HCT116 (cell line): ENCODE measurements at regions of chr3 and their contacts with region 1.

Region 1: DNA sequence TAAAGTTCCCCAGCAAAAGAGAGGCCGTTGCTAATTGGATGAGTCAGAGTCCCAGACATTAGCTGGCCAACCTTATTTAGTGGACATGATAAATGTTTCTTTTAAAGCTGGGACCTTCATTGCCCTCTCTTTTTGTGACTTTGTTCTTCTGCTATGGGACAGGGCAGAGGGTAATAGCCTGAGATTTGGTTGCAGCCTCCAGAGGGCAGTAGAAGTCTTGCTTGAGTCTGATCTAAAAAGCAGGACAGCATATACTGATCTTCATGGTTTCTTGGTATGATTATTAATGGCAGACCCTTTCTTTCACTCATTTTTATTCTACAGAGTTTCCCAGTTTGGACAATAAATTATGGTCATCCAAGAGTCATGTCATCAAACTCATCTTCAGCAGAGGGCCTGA is 25.1 kb upstream of the ZKSCAN7 start:
- DNase-seq: peak; percentile 10
- ATAC-seq: peak; percentile 77
- H3K4me3 ChIP-seq: no peak overlapping the region
- H3K27ac ChIP-seq: no peak overlapping the region
- H3K4me1 ChIP-seq: no peaks in the 10 kb centered on the region
- H3K27me3 ChIP-seq: no peaks in the 10 kb centered on the region
- CTCF ChIP-seq: peak; percentile 40 to 60 (median 55); a peak in 5 of 6 replicates
- POLR2A ChIP-seq: no peak
- RAD21 ChIP-seq: peak; percentile 62

Region 2: DNA sequence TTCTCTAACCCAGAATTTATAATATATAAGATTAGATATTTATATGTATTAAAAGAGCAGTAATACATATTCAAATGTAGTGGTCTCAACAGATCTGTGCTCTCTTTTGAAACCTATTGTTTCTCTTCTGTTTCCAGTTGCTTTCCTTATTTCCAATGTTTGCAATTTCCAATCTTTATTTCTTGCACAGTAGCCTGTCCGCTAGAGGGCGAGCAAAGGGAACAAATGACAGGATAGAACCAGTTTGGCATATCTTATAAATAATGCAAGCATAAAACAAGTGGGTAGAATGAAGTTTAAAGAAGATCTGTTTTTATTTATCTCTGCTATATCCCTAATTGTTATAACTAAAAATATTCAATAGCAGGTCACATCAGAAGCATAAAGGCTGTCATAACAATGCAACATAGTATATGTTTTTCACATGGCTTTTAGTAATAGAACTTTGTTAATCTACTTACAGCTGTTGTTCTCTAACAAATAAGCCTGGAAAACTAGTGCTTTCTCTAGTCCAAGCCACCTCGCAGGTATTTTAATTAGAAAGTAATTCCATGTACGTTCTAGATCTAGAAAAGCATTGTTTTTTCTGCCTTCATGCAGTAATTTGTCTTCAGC is 206.5 kb before region 1 on chr3:
- CTCF ChIA-PET with region 1: interaction called, 3 read pairs
- POLR2A ChIA-PET with region 1: no interaction called
- RAD21 ChIA-PET with region 1: no interaction called
- intact Hi-C with region 1: loop called (anchors 5 kb)
- DNase-seq: peak; percentile 46
- ATAC-seq: peak; percentile 76
- H3K4me3 ChIP-seq: no peak overlapping the region
- H3K27ac ChIP-seq: no peak overlapping the region
- H3K4me1 ChIP-seq: peaks cover 0 to 4% of the 10 kb centered on the region in 2 experiments; a peak in 1 of 4 replicates
- H3K27me3 ChIP-seq: no peaks in the 10 kb centered on the region
- CTCF ChIP-seq: peak; percentile 78 to 91 (median 81)
- POLR2A ChIP-seq: no peak
- RAD21 ChIP-seq: peak; percentile 84

Region 3: GRCh38 chr3:44734646-44735168 is 204.8 kb after region 1 on chr3:
- CTCF ChIA-PET with region 1: no interaction called
- POLR2A ChIA-PET with region 1: no interaction called
- RAD21 ChIA-PET with region 1: no interaction called
- intact Hi-C with region 1: no loop called
- DNase-seq: no peak
- ATAC-seq: no peak
- H3K4me3 ChIP-seq: no peak overlapping the region
- H3K27ac ChIP-seq: no peak overlapping the region
- H3K4me1 ChIP-seq: no peaks in the 10 kb centered on the region
- H3K27me3 ChIP-seq: no peaks in the 10 kb centered on the region
- CTCF ChIP-seq: no peak
- POLR2A ChIP-seq: no peak
- RAD21 ChIP-seq: no peak

Region 4: DNA sequence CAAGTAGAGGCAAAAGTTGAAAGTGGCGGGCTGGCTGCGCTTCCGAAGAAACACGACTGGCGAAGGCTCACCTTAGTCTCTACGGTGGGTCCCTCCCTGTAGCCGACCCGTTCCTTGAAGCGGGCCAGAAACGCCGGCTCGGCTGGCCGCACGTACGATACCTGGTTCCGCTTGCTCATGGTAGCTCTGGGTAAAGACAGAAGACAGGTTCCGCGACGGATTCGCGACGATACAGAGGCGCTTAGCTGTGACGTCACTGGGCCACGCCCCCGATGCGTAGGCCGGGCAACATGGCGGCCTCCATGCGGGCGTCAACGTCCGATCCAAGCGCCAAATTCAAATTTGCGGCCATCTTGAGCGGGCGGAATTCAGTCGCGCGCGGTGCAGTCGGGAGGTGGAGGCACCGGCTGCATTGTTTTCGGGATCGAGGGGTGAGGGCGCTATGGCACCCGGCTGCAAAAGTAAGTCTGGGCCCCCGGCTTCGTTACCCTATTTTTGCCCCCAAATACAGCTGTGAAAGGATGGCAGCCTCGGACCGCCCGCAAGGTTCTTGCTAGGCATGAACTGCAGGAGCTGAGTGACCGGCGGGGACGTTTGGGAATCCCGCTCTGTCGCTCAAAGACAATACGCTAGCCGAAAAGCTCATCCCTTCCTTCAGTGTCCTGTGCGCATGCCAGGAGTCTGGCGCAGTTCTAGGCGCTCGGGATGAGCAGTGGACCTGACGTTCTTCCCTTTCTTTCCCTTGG is 231.7 kb after region 1 on chr3 and contains the starts of genes KIAA1143 and KIF15:
- CTCF ChIA-PET with region 1: no interaction called
- POLR2A ChIA-PET with region 1: no interaction called
- RAD21 ChIA-PET with region 1: no interaction called
- intact Hi-C with region 1: loop called (anchors 5 kb)
- DNase-seq: peak; percentile 92
- ATAC-seq: peak; percentile 89
- H3K4me3 ChIP-seq: peak within 1 kb of the TSS; percentile 81 to 93
- H3K27ac ChIP-seq: peak within 1 kb of the TSS; percentile 77
- H3K4me1 ChIP-seq: peaks cover 7 to 10% of the 10 kb centered on the region in 2 experiments; a peak in 2 of 4 replicates
- H3K27me3 ChIP-seq: no peaks in the 10 kb centered on the region
- CTCF ChIP-seq: no peak
- POLR2A ChIP-seq: peak; percentile 13
- RAD21 ChIP-seq: no peak
- total RNA-seq, gene KIAA1143: 32.2 TPM
- total RNA-seq, gene KIF15: 20.9 TPM

Region 5: GRCh38 chr3:44913868-44914468 is 384.0 kb after region 1 on chr3:
- CTCF ChIA-PET with region 1: interaction called, 4 read pairs
- POLR2A ChIA-PET with region 1: no interaction called
- RAD21 ChIA-PET with region 1: no interaction called
- intact Hi-C with region 1: loop called (anchors 1 kb)
- DNase-seq: peak; percentile 40
- ATAC-seq: peak; percentile 85
- H3K4me3 ChIP-seq: no peak overlapping the region
- H3K27ac ChIP-seq: no peak overlapping the region
- H3K4me1 ChIP-seq: no peaks in the 10 kb centered on the region
- H3K27me3 ChIP-seq: no peaks in the 10 kb centered on the region
- CTCF ChIP-seq: peak; percentile 64 to 79 (median 77)
- POLR2A ChIP-seq: no peak
- RAD21 ChIP-seq: peak; percentile 89

Region 6: GRCh38 chr3:44992555-44993470 is 462.9 kb after region 1 on chr3:
- CTCF ChIA-PET with region 1: no interaction called
- POLR2A ChIA-PET with region 1: no interaction called
- RAD21 ChIA-PET with region 1: no interaction called
- intact Hi-C with region 1: loop called (anchors 10 kb)
- DNase-seq: no peak
- ATAC-seq: peak; percentile 75
- H3K4me3 ChIP-seq: no peak overlapping the region
- H3K27ac ChIP-seq: peak overlapping the region; percentile 37
- H3K4me1 ChIP-seq: peaks cover 26 to 30% of the 10 kb centered on the region in 2 experiments
- H3K27me3 ChIP-seq: no peaks in the 10 kb centered on the region
- CTCF ChIP-seq: peak; percentile 34 to 95 (median 86); a peak in 4 of 6 replicates
- POLR2A ChIP-seq: no peak
- RAD21 ChIP-seq: peak; percentile 37